Ascending aorta (tissue), 2 donors: ENCODE measurements at regions of chr6 and their contacts with region 1.

Region 1: GRCh38 chr6:56902641-56903464 is 52.1 kb upstream of the BEND6 start:
- DNase-seq: no peak
- H3K4me3 ChIP-seq: no peak overlapping the region
- H3K27ac ChIP-seq: no peak overlapping the region
- H3K4me1 ChIP-seq: no peaks in the 10 kb centered on the region
- H3K27me3 ChIP-seq: no peaks in the 10 kb centered on the region
- CTCF ChIP-seq: peak in 2 of 3 experiments; percentile 72 to 78

Region 2: GRCh38 chr6:56613247-56613851 is 289.5 kb before region 1 on chr6:
- intact Hi-C with region 1: no loop called
- DNase-seq: no peak
- H3K4me3 ChIP-seq: no peak overlapping the region
- H3K27ac ChIP-seq: no peak overlapping the region
- H3K4me1 ChIP-seq: no peaks in the 10 kb centered on the region
- H3K27me3 ChIP-seq: no peaks in the 10 kb centered on the region
- CTCF ChIP-seq: no peak

Region 3: GRCh38 chr6:56955171-56956045 is 52.6 kb after region 1 on chr6:
- intact Hi-C with region 1: loop called (anchors 2 kb)
- DNase-seq: peak; percentile 36 to 89
- H3K4me3 ChIP-seq: peak overlapping the region; percentile 61 to 75
- H3K27ac ChIP-seq: peak overlapping the region; percentile 46 to 52
- H3K4me1 ChIP-seq: peaks cover 0 to 3% of the 10 kb centered on the region in 2 donors
- H3K27me3 ChIP-seq: no peaks in the 10 kb centered on the region
- CTCF ChIP-seq: peak; percentile 61 to 80 (median 68)